CD14-positive monocyte (primary cell): ENCODE measurements at regions of chr5 and their contacts with region 1.

Region 1: GRCh38 chr5:147464211-147464610 is 45.7 kb downstream of the DPYSL3 start:
- DNase-seq: peak in 1 of 3 donors; percentile 18
- H3K4me3 ChIP-seq: no peak overlapping the region
- H3K4me3 Mint-ChIP-seq: no peak overlapping the region
- H3K27ac ChIP-seq: no peak overlapping the region
- H3K27ac Mint-ChIP-seq: no peak overlapping the region
- H3K4me1 ChIP-seq: no peaks in the 10 kb centered on the region
- H3K4me1 Mint-ChIP-seq: peaks cover 4% of the 10 kb centered on the region
- H3K27me3 ChIP-seq: no peaks in the 10 kb centered on the region
- H3K27me3 Mint-ChIP-seq: no peaks in the 10 kb centered on the region
- CTCF ChIP-seq: peak; percentile 58

Region 2: GRCh38 chr5:147558826-147559225 is 94.6 kb after region 1 on chr5:
- intact Hi-C with region 1: loop called (anchors 5 to 10 kb)
- DNase-seq: peak in 2 of 3 donors; percentile 4 to 22
- H3K4me3 ChIP-seq: no peak overlapping the region
- H3K4me3 Mint-ChIP-seq: no peak overlapping the region
- H3K27ac ChIP-seq: no peak overlapping the region
- H3K27ac Mint-ChIP-seq: no peak overlapping the region
- H3K4me1 ChIP-seq: no peaks in the 10 kb centered on the region
- H3K4me1 Mint-ChIP-seq: peaks cover 1% of the 10 kb centered on the region
- H3K27me3 ChIP-seq: no peaks in the 10 kb centered on the region
- H3K27me3 Mint-ChIP-seq: peaks cover 5 to 14% (median 6%) of the 10 kb centered on the region in 3 donors
- CTCF ChIP-seq: peak; percentile 50

Region 3: GRCh38 chr5:147613359-147613758 is 149.1 kb after region 1 on chr5:
- intact Hi-C with region 1: no loop called
- DNase-seq: no peak
- H3K4me3 ChIP-seq: no peak overlapping the region
- H3K4me3 Mint-ChIP-seq: no peak overlapping the region
- H3K27ac ChIP-seq: no peak overlapping the region
- H3K27ac Mint-ChIP-seq: no peak overlapping the region
- H3K4me1 ChIP-seq: no peaks in the 10 kb centered on the region
- H3K4me1 Mint-ChIP-seq: no peaks in the 10 kb centered on the region
- H3K27me3 ChIP-seq: no peaks in the 10 kb centered on the region
- H3K27me3 Mint-ChIP-seq: peaks cover 0 to 2% (median 2%) of the 10 kb centered on the region in 3 donors
- CTCF ChIP-seq: no peak

Region 4: GRCh38 chr5:147648597-147648996 is 184.4 kb after region 1 on chr5:
- intact Hi-C with region 1: no loop called
- DNase-seq: no peak
- H3K4me3 ChIP-seq: no peak overlapping the region
- H3K4me3 Mint-ChIP-seq: no peak overlapping the region
- H3K27ac ChIP-seq: no peak overlapping the region
- H3K27ac Mint-ChIP-seq: no peak overlapping the region
- H3K4me1 ChIP-seq: no peaks in the 10 kb centered on the region
- H3K4me1 Mint-ChIP-seq: no peaks in the 10 kb centered on the region
- H3K27me3 ChIP-seq: no peaks in the 10 kb centered on the region
- H3K27me3 Mint-ChIP-seq: peaks cover 0 to 2% (median 0%) of the 10 kb centered on the region in 3 donors
- CTCF ChIP-seq: no peak